Kidney (tissue), 22 donors: ENCODE measurements at regions of chr17 and their contacts with region 1.

Region 1: DNA sequence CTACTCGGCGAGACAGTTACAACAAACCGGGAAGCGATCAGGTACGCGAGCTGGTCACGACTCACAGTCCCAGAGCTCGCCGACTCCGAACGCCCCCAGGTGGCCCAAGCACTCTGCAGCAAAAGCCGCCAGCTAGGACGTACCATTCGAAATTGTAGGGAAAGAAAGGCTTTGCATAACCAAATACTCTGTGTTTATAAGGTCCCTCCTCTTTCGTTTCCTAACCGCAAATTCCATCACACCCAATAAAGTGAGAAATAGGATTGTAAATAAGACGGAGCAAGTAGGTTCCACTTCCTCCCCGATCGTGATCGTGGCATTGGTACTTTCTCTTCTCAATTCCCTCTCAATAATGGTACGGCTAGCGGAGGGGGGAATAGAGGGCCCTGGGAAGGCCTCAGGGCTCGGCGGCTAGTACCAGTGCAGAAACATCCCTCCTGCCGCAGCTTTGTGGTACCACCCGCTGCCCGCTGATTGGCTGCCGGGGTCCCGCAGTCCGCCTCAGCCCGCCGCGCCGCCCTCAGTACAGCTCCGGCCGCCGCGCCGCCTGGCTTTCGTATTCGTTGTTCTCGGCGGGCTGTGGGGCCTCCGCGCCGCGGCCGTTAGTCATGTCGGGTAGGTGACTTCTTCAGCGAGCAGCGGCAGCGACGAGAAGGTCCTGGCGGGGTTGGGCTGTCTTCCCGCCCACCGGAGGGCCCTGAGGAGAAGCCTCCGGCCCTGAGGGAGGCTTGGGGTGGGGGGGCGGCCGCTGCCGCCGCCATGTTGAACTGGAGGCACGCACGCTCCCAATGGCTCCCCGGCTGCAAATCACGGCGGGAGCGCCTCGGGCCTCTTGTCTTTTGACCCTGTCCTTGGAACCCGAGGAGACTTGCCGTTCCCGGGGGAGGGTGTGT is at the start of gene TAF15:
- DNase-seq: peak; percentile 97 to 99 (median 98)
- H3K4me3 ChIP-seq: peak within 1 kb of the TSS; percentile 96 to 98 (median 97)
- H3K27ac ChIP-seq: peak within 1 kb of the TSS; percentile 97
- H3K4me1 ChIP-seq: peaks cover 2 to 6% (median 6%) of the 10 kb centered on the region in 3 donors
- H3K27me3 ChIP-seq: no peaks in the 10 kb centered on the region
- CTCF ChIP-seq: peak; percentile 70
- total RNA-seq, gene TAF15: 149 TPM

Region 2: GRCh38 chr17:35766903-35767510 is 42.2 kb before region 1 on chr17:
- intact Hi-C with region 1: loop called (anchors 5 kb)
- DNase-seq: peak in 1 of 5 donors; percentile 55
- H3K4me3 ChIP-seq: no peak overlapping the region
- H3K27ac ChIP-seq: no peak overlapping the region
- H3K4me1 ChIP-seq: peaks cover 0 to 2% (median 0%) of the 10 kb centered on the region in 3 donors
- H3K27me3 ChIP-seq: no peaks in the 10 kb centered on the region
- CTCF ChIP-seq: peak; percentile 20

Region 3: DNA sequence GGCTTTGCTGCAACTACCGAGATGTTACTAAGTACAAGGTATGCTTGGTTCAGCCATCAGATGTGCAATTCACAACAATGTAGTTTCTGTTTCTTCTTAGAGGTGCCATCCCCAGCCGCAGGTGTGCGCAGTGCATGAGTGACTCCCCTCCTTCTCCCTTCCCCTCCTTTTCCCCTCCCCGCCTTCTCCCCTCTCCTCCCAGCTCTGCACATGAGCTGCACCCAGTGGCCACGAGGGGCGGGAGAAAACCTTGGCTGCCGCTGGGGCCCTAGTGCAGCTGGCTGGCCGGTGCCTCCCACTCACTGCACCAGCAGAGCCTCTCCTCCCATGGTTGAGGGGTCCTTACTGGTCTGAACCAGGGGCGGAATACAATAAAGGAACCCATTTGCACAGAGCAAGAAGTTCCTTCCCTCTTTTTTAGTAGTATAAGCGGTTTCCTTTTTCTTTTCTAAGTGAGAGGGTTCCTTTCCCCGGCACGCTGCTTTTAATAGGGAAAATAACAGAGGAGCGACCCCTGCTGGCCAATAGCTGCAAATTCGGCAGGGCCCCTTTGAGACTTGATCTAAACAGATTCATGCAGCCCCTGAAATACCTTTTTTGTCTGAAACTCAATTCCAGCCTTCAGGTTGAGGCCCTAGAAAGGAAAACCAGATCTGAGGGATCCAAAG is 199.9 kb after region 1 on chr17:
- intact Hi-C with region 1: no loop called
- DNase-seq: no peak
- H3K4me3 ChIP-seq: no peak overlapping the region
- H3K27ac ChIP-seq: no peak overlapping the region
- H3K4me1 ChIP-seq: peaks cover 0 to 3% (median 0%) of the 10 kb centered on the region in 3 donors
- H3K27me3 ChIP-seq: no peaks in the 10 kb centered on the region
- CTCF ChIP-seq: no peak